SK-N-SH (cell line): ENCODE measurements at regions of chr2 and their contacts with region 1.

Region 1: DNA sequence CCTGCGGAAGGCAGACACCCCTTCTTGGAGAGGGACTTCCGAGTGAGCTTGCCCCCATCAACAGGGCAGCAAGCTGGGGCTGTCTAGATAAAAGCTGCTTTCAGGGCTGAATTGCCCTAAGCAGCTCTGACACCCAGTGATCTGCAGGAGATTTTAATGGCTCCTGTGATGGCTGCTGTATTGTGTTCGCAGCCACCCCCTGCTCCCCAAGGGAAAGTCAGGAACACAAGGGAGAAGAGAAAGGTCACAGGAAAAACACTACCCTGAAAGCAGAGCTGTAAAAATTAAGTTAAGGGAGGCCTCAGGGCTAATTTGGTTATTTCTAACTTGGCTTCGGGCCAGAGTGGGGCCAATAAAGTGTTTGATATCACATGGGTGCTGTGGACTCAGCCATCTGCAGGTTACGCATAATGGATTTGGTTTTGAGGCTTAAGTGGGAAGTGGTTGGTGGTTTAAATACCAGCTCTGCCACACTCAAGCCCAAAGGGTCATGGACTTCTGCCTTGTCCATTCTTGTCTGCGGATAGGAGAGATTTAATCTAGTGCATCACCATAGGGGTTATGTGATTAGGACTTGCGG is 147.6 kb downstream of the CLIP4 start:
- DNase-seq: peak; percentile 79
- H3K4me3 ChIP-seq: no peak overlapping the region; a peak in 1 of 4 replicates
- H3K27ac ChIP-seq: peak overlapping the region; percentile 4 to 100; a peak in 3 of 4 replicates
- H3K4me1 ChIP-seq: peaks cover 0 to 58% of the 10 kb centered on the region in 2 experiments; a peak in 3 of 4 replicates
- H3K27me3 ChIP-seq: no peaks in the 10 kb centered on the region
- CTCF ChIP-seq: no peak
- EP300 ChIP-seq: peak in 1 of 2 experiments; percentile 98; a peak in 2 of 4 replicates
- RAD21 ChIP-seq: peak; percentile 33

Region 2: GRCh38 chr2:28981016-28981441 is 281.7 kb before region 1 on chr2 and contains the start of gene TOGARAM2:
- CTCF ChIA-PET with region 1: no interaction called
- POLR2A ChIA-PET with region 1: no interaction called
- DNase-seq: peak; percentile 55
- H3K4me3 ChIP-seq: no peak within 1 kb of the TSS
- H3K27ac ChIP-seq: no peak within 1 kb of the TSS
- H3K4me1 ChIP-seq: peaks cover 0 to 15% of the 10 kb centered on the region in 2 experiments; a peak in 1 of 4 replicates
- H3K27me3 ChIP-seq: no peaks in the 10 kb centered on the region
- CTCF ChIP-seq: no peak
- EP300 ChIP-seq: no peak
- RAD21 ChIP-seq: no peak
- polyA plus RNA-seq, gene TOGARAM2: 0.10 and 0.69 TPM in 2 replicates

Region 3: GRCh38 chr2:29249666-29250253 is 13.0 kb before region 1 on chr2:
- CTCF ChIA-PET with region 1: interaction called, 9 read pairs
- POLR2A ChIA-PET with region 1: interaction called, 10 read pairs
- DNase-seq: peak; percentile 91
- H3K4me3 ChIP-seq: no peak overlapping the region
- H3K27ac ChIP-seq: peak overlapping the region in 1 of 2 experiments; percentile 85; a peak in 2 of 4 replicates
- H3K4me1 ChIP-seq: peaks cover 0 to 39% of the 10 kb centered on the region in 2 experiments; a peak in 1 of 4 replicates
- H3K27me3 ChIP-seq: peaks cover under 1% of the 10 kb centered on the region; the same call in 1 of the 2 replicates
- CTCF ChIP-seq: no peak
- EP300 ChIP-seq: peak in 1 of 2 experiments; percentile 85; a peak in 1 of 4 replicates
- RAD21 ChIP-seq: no peak

Region 4: GRCh38 chr2:29273685-29274611 is 11.2 kb after region 1 on chr2:
- CTCF ChIA-PET with region 1: interaction called, 13 read pairs
- POLR2A ChIA-PET with region 1: interaction called, 28 read pairs
- DNase-seq: peak; percentile 80
- H3K4me3 ChIP-seq: no peak overlapping the region
- H3K27ac ChIP-seq: peak overlapping the region in 1 of 2 experiments; percentile 100; a peak in 2 of 4 replicates
- H3K4me1 ChIP-seq: peaks cover 2 to 86% of the 10 kb centered on the region in 2 experiments; a peak in 3 of 4 replicates
- H3K27me3 ChIP-seq: peaks cover 17% of the 10 kb centered on the region; the same call in 1 of the 2 replicates
- CTCF ChIP-seq: no peak
- EP300 ChIP-seq: peak in 1 of 2 experiments; percentile 94; a peak in 2 of 4 replicates
- RAD21 ChIP-seq: peak; percentile 39

Region 5: GRCh38 chr2:29281086-29281915 is 18.5 kb after region 1 on chr2:
- CTCF ChIA-PET with region 1: interaction called, 9 read pairs
- POLR2A ChIA-PET with region 1: interaction called, 10 read pairs
- DNase-seq: peak; percentile 82
- H3K4me3 ChIP-seq: peak overlapping the region; percentile 21 to 22; a peak in 2 of 4 replicates
- H3K27ac ChIP-seq: peak overlapping the region in 1 of 2 experiments; percentile 97; a peak in 2 of 4 replicates
- H3K4me1 ChIP-seq: peaks cover 3 to 60% of the 10 kb centered on the region in 2 experiments; a peak in 3 of 4 replicates
- H3K27me3 ChIP-seq: peaks cover 7% of the 10 kb centered on the region; the same call in 1 of the 2 replicates
- CTCF ChIP-seq: no peak
- EP300 ChIP-seq: peak in 1 of 2 experiments; percentile 85; a peak in 2 of 4 replicates
- RAD21 ChIP-seq: peak; percentile 49

Region 6: DNA sequence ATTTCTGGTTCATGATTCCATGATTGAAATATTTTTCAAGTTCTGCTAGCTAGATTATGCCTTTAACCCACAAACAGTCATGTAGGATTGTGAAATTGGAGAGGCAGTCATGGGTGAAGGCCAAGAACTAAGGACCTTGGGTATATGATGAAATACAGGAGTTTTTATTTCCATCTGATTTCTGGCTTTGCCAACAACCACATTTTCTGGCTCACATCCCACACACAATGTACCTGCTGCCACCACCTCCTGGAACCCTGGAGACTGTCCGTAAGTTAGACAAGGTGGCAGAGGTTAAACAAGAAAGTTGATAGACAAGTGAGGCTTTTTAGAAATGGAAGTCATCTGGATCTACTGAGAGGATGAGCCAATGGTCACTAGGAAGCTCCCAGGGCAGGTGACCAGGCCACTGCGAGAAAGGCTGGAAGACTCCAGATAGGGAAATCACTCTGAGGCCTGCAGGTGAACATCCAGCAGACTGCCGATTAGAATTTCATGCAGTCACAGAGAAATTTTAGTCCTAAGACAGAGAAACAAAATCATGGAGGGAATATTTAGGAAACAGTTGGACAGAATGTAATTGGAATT is 256.7 kb after region 1 on chr2:
- CTCF ChIA-PET with region 1: no interaction called
- POLR2A ChIA-PET with region 1: interaction called, 20 read pairs
- DNase-seq: no peak
- H3K4me3 ChIP-seq: no peak overlapping the region
- H3K27ac ChIP-seq: peak overlapping the region in 1 of 2 experiments; percentile 100; a peak in 2 of 4 replicates
- H3K4me1 ChIP-seq: peaks cover 9 to 69% of the 10 kb centered on the region in 2 experiments; a peak in 2 of 4 replicates
- H3K27me3 ChIP-seq: no peaks in the 10 kb centered on the region
- CTCF ChIP-seq: no peak
- EP300 ChIP-seq: no peak
- RAD21 ChIP-seq: no peak

Region 7: DNA sequence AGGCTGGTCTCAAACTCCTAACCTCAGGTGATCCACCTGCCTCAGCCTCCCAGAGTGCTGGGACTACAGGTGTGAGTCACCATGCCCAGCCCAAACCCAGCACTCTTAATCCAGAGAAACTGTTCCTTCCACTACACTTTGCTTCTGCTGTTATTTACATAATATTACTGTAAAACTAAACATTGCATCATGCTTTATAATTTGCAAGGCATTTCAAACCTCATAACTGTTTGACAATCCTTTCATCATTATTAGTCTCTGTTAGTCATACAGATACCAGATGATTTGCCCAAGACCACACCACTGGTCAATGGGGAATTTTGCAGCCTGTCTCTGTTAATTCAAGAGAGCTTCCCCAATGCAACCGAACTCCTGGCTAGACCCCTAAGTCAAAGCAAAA is 320.3 kb after region 1 on chr2:
- CTCF ChIA-PET with region 1: no interaction called
- POLR2A ChIA-PET with region 1: interaction called, 15 read pairs
- DNase-seq: no peak
- H3K4me3 ChIP-seq: no peak overlapping the region; a peak in 1 of 4 replicates
- H3K27ac ChIP-seq: peak overlapping the region in 1 of 2 experiments; percentile 100; a peak in 2 of 4 replicates
- H3K4me1 ChIP-seq: peaks cover 9 to 80% of the 10 kb centered on the region in 2 experiments; a peak in 2 of 4 replicates
- H3K27me3 ChIP-seq: peaks cover 16% of the 10 kb centered on the region; the same call in 1 of the 2 replicates
- CTCF ChIP-seq: no peak
- EP300 ChIP-seq: no peak
- RAD21 ChIP-seq: no peak

Region 8: DNA sequence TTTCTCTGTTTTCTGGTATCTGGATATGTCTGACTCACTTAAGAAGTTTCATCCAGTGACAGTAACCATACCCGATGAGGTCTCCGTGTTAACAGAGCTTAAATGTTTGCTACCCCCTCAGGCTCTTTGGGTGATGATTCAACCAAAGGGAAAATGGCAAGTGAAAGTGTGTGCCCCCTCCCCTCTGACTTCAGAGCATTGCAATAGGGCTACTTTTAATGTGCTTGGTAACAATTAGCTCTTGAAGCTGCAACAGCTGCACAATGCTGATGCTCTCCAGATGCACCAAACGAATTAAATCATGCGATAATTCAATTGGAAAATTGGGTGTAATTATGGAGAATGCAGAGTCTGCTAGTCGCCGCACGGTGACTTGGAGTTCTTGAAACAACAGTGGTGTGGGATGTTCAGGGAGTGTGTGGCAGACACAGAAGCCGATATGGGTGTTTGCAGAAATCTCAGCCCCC is 387.9 kb after region 1 on chr2:
- CTCF ChIA-PET with region 1: interaction called, 4 read pairs
- POLR2A ChIA-PET with region 1: interaction called, 16 read pairs
- DNase-seq: peak; percentile 74
- H3K4me3 ChIP-seq: no peak overlapping the region
- H3K27ac ChIP-seq: peak overlapping the region in 1 of 2 experiments; percentile 99; a peak in 2 of 4 replicates
- H3K4me1 ChIP-seq: peaks cover 0 to 41% of the 10 kb centered on the region in 2 experiments; a peak in 2 of 4 replicates
- H3K27me3 ChIP-seq: no peaks in the 10 kb centered on the region
- CTCF ChIP-seq: no peak
- EP300 ChIP-seq: peak; percentile 59 to 100; a peak in 2 of 4 replicates
- RAD21 ChIP-seq: peak; percentile 49